ENCODE measurements at regions of chr19 and their contacts with region 1.

Region 1: GRCh38 chr19:43651758-43652545 is 12.3 kb upstream of the CADM4 start:
- DNase-seq: peak; percentile 65
- H3K4me3 ChIP-seq: no peak overlapping the region
- H3K27ac ChIP-seq: peak overlapping the region in 1 of 4 donors; percentile 28
- H3K4me1 ChIP-seq: no peaks in the 10 kb centered on the region
- H3K27me3 ChIP-seq: no peaks in the 10 kb centered on the region
- CTCF ChIP-seq: peak; percentile 70 to 80 (median 73)
- EP300 ChIP-seq: no peak
- POLR2A ChIP-seq: no peak

Region 2: DNA sequence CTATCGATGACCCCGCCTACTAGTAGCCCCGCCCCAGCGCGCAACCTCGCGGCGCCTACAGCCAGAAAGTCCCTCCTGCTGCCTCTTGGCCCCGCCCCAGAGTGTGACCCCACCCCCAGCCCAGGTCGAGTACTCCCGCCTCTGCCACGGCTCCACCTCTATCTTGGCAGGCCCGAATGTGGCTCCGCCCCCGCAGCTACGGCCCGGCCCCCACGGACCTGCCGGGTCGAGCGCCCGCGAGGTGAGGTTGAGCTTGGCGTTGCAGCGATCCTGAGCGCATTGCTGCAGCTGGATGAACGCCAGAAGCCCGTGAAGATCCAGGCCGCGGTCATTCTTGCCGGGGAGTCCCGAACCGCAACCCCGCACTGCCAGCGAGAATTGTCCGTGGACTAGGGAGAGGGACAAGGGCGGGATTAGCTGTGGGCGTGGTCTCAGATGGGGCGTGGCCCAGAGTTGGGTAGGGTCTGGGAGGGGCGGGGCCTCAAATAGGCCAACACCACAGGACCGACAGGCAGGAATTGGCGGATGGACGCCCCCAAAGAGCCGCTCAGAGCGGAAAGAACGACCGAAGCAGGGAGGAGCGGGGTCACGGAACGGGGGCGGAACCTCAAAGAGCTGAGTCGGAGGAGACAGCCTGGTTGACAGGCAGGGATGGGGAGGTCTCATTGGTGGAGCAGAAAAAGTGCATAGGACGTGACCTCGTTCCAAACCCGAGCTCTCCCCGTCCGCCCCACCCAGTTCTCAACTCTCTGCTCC is 188.4 kb before region 1 on chr19:
- in situ Hi-C with region 1: no loop called
- intact Hi-C with region 1: no loop called
- DNase-seq: peak; percentile 99
- H3K4me3 ChIP-seq: peak overlapping the region; percentile 30 to 64 (median 50)
- H3K27ac ChIP-seq: peak overlapping the region; percentile 80 to 88 (median 86)
- H3K4me1 ChIP-seq: peaks cover 3 to 36% (median 12%) of the 10 kb centered on the region in 4 donors
- H3K27me3 ChIP-seq: no peaks in the 10 kb centered on the region
- CTCF ChIP-seq: no peak
- EP300 ChIP-seq: no peak
- POLR2A ChIP-seq: peak; percentile 38

Region 3: GRCh38 chr19:43562698-43563241 is 89.2 kb before region 1 on chr19:
- in situ Hi-C with region 1: loop called in 1 of 4 experiments (anchors 10 kb)
- intact Hi-C with region 1: loop called (anchors 10 kb)
- DNase-seq: peak; percentile 73
- H3K4me3 ChIP-seq: no peak overlapping the region
- H3K27ac ChIP-seq: peak overlapping the region; percentile 59 to 68 (median 66)
- H3K4me1 ChIP-seq: peaks cover 0 to 13% (median 7%) of the 10 kb centered on the region in 4 donors
- H3K27me3 ChIP-seq: no peaks in the 10 kb centered on the region
- CTCF ChIP-seq: no peak
- EP300 ChIP-seq: no peak
- POLR2A ChIP-seq: no peak

Region 4: GRCh38 chr19:43575955-43576878 is 75.7 kb before region 1 on chr19:
- in situ Hi-C with region 1: no loop called
- intact Hi-C with region 1: no loop called
- DNase-seq: no peak
- H3K4me3 ChIP-seq: peak overlapping the region in 3 of 4 donors; percentile 19 to 99 (median 72)
- H3K27ac ChIP-seq: peak overlapping the region; percentile 74 to 94 (median 86)
- H3K4me1 ChIP-seq: peaks cover 5 to 33% (median 14%) of the 10 kb centered on the region in 4 donors
- H3K27me3 ChIP-seq: no peaks in the 10 kb centered on the region
- CTCF ChIP-seq: no peak
- EP300 ChIP-seq: no peak
- POLR2A ChIP-seq: no peak

Region 5: DNA sequence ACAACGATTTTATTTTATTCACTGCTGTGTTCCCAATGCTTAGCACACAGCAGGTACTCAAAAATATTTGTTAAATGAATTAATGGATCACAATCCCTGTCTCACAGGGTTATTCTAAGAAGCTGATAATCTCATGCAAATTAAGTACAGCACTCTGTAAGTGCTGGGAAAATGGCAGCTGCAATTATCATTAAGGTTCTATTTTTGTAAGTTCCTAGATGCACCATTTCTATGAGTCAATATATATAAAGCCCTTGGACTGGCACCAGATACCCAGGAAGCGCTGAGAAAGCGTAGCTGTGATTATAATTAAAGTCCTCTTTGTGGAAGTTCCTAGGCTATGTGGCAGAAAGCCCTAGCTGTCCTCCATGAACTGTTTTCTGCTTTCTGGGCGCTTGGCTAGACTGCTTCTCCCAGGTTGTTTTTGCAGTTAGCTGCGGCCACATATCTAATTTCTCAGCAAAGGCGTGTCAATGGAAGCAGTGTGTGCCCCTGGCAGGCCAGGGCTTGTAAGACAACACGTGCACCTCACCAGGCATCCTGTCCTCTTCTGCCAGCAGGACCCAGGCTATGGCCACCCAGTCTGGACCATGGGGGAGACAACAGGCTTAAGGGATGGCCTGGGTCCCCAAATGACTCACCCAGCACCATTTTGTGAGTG is 45.3 kb before region 1 on chr19:
- in situ Hi-C with region 1: no loop called
- intact Hi-C with region 1: no loop called
- DNase-seq: no peak
- H3K4me3 ChIP-seq: no peak overlapping the region
- H3K27ac ChIP-seq: no peak overlapping the region
- H3K4me1 ChIP-seq: no peaks in the 10 kb centered on the region
- H3K27me3 ChIP-seq: no peaks in the 10 kb centered on the region
- CTCF ChIP-seq: no peak
- EP300 ChIP-seq: no peak
- POLR2A ChIP-seq: no peak